ENCODE measurements at regions of chr1 and their contacts with region 1.

Region 1: GRCh38 chr1:88683541-88684481 is at the start of gene PKN2:
- DNase-seq: peak; percentile 93 to 100 (median 96)
- ATAC-seq: peak; percentile 93
- H3K4me3 ChIP-seq: peak within 1 kb of the TSS; percentile 95
- H3K4me3 Mint-ChIP-seq: peak within 1 kb of the TSS; percentile 93
- H3K27ac ChIP-seq: peak within 1 kb of the TSS; percentile 92 to 94
- H3K27ac Mint-ChIP-seq: peak within 1 kb of the TSS; percentile 95
- H3K4me1 ChIP-seq: peaks cover 15% of the 10 kb centered on the region
- H3K4me1 Mint-ChIP-seq: peaks cover 45% of the 10 kb centered on the region
- H3K27me3 ChIP-seq: no peaks in the 10 kb centered on the region
- H3K27me3 Mint-ChIP-seq: no peaks in the 10 kb centered on the region
- CTCF ChIP-seq: peak; percentile 31
- total RNA-seq, gene PKN2: 38.8 to 41.4 TPM

Region 2: GRCh38 chr1:88001460-88001859 is 682.4 kb before region 1 on chr1:
- CTCF ChIA-PET with region 1: no interaction called
- POLR2A ChIA-PET with region 1: no interaction called
- intact Hi-C with region 1: no loop called
- DNase-seq: no peak
- ATAC-seq: no peak
- H3K4me3 ChIP-seq: no peak overlapping the region
- H3K4me3 Mint-ChIP-seq: no peak overlapping the region
- H3K27ac ChIP-seq: no peak overlapping the region
- H3K27ac Mint-ChIP-seq: no peak overlapping the region
- H3K4me1 ChIP-seq: no peaks in the 10 kb centered on the region
- H3K4me1 Mint-ChIP-seq: no peaks in the 10 kb centered on the region
- H3K27me3 ChIP-seq: no peaks in the 10 kb centered on the region
- H3K27me3 Mint-ChIP-seq: peaks cover 6% of the 10 kb centered on the region
- CTCF ChIP-seq: no peak

Region 3: GRCh38 chr1:88655685-88656299 is 28.0 kb before region 1 on chr1:
- CTCF ChIA-PET with region 1: interaction called, 9 read pairs
- POLR2A ChIA-PET with region 1: interaction called, 25 read pairs
- intact Hi-C with region 1: loop called in 1 of 2 experiments (anchors 2 kb)
- DNase-seq: peak in 3 of 14 experiments; percentile 39 to 62 (median 60)
- ATAC-seq: no peak
- H3K4me3 ChIP-seq: no peak overlapping the region
- H3K4me3 Mint-ChIP-seq: no peak overlapping the region
- H3K27ac ChIP-seq: no peak overlapping the region
- H3K27ac Mint-ChIP-seq: no peak overlapping the region
- H3K4me1 ChIP-seq: no peaks in the 10 kb centered on the region
- H3K4me1 Mint-ChIP-seq: peaks cover 16% of the 10 kb centered on the region
- H3K27me3 ChIP-seq: no peaks in the 10 kb centered on the region
- H3K27me3 Mint-ChIP-seq: no peaks in the 10 kb centered on the region
- CTCF ChIP-seq: peak; percentile 83

Region 4: DNA sequence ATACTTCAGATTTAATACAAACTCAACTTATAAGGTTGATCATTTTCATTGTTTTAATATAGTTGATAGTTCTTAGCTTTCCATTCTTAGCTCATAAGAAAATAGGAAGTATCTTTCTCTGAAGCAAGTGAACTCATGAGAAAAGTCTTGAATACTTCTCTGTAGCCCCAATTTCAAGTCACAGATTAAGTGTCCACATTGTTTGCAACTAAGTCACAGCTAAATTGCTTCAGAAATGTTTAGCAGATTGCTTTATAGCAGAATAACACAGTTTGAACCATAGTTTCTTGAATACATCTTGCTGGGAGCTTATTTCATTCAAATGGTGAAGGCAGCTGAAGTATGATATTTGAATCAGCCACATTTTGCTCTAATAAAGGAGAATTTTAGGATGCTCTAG is 10.4 kb before region 1 on chr1:
- CTCF ChIA-PET with region 1: no interaction called
- POLR2A ChIA-PET with region 1: interaction called, 15 read pairs
- intact Hi-C with region 1: no loop called
- DNase-seq: no peak
- ATAC-seq: no peak
- H3K4me3 ChIP-seq: no peak overlapping the region
- H3K4me3 Mint-ChIP-seq: no peak overlapping the region
- H3K27ac ChIP-seq: no peak overlapping the region
- H3K27ac Mint-ChIP-seq: no peak overlapping the region
- H3K4me1 ChIP-seq: no peaks in the 10 kb centered on the region
- H3K4me1 Mint-ChIP-seq: no peaks in the 10 kb centered on the region
- H3K27me3 ChIP-seq: no peaks in the 10 kb centered on the region
- H3K27me3 Mint-ChIP-seq: no peaks in the 10 kb centered on the region
- CTCF ChIP-seq: no peak

Region 5: DNA sequence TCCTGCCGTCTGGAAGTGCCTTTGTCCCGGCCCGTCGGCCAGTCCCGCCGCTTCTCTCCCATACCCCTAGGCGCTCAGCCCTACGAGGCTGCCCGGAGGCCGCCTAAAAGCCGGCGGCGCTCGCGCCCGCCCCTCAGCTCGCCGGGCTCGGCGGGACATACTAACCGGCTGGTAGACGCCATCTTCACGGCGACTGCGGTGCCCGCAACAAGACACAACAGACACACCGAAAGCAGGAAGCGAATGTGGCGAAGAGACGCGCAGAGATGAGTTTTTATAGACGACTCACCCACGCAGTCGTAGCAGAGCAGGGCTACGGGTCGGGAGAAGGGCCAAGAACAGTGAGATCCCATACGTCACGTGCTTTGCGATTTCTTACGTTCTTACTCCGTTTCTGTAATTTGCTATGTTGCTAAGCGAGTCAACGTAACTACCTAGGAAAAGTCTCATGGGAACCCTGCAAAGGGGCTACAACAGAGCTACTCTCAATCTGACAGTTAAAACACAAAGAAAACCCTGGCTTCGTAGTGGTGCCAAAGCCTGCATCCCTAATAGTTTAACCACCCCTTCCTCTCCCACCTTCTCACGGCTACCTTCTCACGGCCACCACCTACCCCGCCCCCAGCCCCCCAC is 207.6 kb after region 1 on chr1 and contains the start of gene GTF2B:
- CTCF ChIA-PET with region 1: no interaction called
- POLR2A ChIA-PET with region 1: interaction called, 31 read pairs
- intact Hi-C with region 1: loop called (anchors 2 kb)
- DNase-seq: peak; percentile 88 to 98 (median 92)
- ATAC-seq: peak; percentile 85
- H3K4me3 ChIP-seq: peak within 1 kb of the TSS; percentile 86
- H3K4me3 Mint-ChIP-seq: peak within 1 kb of the TSS; percentile 96
- H3K27ac ChIP-seq: peak within 1 kb of the TSS; percentile 90 to 93
- H3K27ac Mint-ChIP-seq: peak within 1 kb of the TSS; percentile 91
- H3K4me1 ChIP-seq: peaks cover 18% of the 10 kb centered on the region
- H3K4me1 Mint-ChIP-seq: peaks cover 49% of the 10 kb centered on the region
- H3K27me3 ChIP-seq: no peaks in the 10 kb centered on the region
- H3K27me3 Mint-ChIP-seq: no peaks in the 10 kb centered on the region
- CTCF ChIP-seq: no peak
- total RNA-seq, gene GTF2B: 82.6 to 86.4 TPM

Measured in CD4-positive, alpha-beta T cell (primary cell).